Endothelial cell of umbilical vein (primary cell): ENCODE measurements at regions of chr20 and their contacts with region 1.

Region 1: GRCh38 chr20:36573103-36573794 is at the start of gene TGIF2:
- DNase-seq: peak; percentile 84
- H3K4me3 ChIP-seq: peak within 1 kb of the TSS; percentile 55 to 87 (median 85)
- H3K27ac ChIP-seq: peak within 1 kb of the TSS; percentile 71
- H3K4me1 ChIP-seq: peaks cover 24% of the 10 kb centered on the region
- H3K27me3 ChIP-seq: no peaks in the 10 kb centered on the region
- CTCF ChIP-seq: no peak
- POLR2A ChIP-seq: peak; percentile 78
- total RNA-seq, gene TGIF2: 21.0 and 27.9 TPM in 2 replicates

Region 2: GRCh38 chr20:36550797-36551299 is 22.4 kb before region 1 on chr20:
- CTCF ChIA-PET with region 1: interaction called, 3 read pairs
- POLR2A ChIA-PET with region 1: no interaction called
- dilution Hi-C with region 1: no loop called
- intact Hi-C with region 1: loop called (anchors 2 kb)
- DNase-seq: no peak
- H3K4me3 ChIP-seq: no peak overlapping the region
- H3K27ac ChIP-seq: no peak overlapping the region
- H3K4me1 ChIP-seq: no peaks in the 10 kb centered on the region
- H3K27me3 ChIP-seq: no peaks in the 10 kb centered on the region
- CTCF ChIP-seq: no peak
- POLR2A ChIP-seq: no peak

Region 3: DNA sequence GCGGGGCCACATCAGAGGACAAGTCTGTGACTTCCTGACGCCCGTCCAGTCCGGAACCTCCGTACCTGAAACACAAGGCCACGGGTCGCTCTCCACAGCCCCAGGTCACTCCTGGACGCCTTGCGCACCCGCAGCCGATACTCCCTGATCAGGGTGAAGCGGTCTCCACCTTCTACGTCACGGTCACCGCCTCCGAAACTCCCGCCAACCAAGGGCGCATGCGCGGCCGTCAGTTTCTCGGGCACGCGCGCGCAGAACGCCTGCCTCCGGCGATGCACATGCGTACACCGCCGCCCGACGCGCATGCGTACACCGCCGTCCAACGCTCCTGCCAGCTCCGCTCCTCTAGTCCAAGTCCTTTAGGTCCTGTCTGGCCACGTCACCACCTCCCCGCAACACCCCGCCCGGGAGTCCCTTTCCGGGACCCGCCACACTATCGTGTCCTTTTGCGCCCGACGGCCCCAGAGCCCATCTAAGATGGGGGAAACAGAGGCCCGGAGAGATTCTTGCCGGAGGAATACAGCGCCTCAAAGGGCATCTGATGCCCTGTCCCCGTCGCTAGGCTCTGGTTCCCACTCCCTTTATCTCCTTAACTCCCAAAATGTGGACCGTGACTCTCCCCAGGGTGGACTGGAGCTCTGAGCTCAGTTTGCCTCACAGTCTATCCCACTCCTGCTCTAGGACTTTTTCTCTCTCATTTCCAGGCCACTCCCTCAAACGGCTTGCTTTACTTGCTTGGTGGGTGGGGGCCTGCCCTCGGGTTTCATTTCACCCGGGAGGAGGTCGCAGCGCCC is 200.5 kb after region 1 on chr20 and contains the start of gene DSN1:
- CTCF ChIA-PET with region 1: no interaction called
- POLR2A ChIA-PET with region 1: no interaction called
- dilution Hi-C with region 1: no loop called
- intact Hi-C with region 1: loop called (anchors 2 kb)
- DNase-seq: peak; percentile 99
- H3K4me3 ChIP-seq: peak within 1 kb of the TSS; percentile 53 to 90 (median 79)
- H3K27ac ChIP-seq: peak within 1 kb of the TSS; percentile 89
- H3K4me1 ChIP-seq: peaks cover 17% of the 10 kb centered on the region
- H3K27me3 ChIP-seq: no peaks in the 10 kb centered on the region
- CTCF ChIP-seq: peak in 1 of 2 donors; percentile 79
- POLR2A ChIP-seq: peak; percentile 86
- total RNA-seq, gene DSN1: 24.4 and 25.0 TPM in 2 replicates